Activated CD4-positive, alpha-beta T cell treated with anti-CD3 and anti-CD28 coated beads, Interleukin-2, amount 10 ng/mL, durations not matched to agents 7 days and 5 days (primary cell): ENCODE measurements at regions of chr20 and their contacts with region 1.

Region 1: GRCh38 chr20:34337982-34338726 is 24.9 kb upstream of the ITCH start:
- DNase-seq: no peak
- H3K4me3 Mint-ChIP-seq: no peak overlapping the region
- H3K27ac Mint-ChIP-seq: no peak overlapping the region
- H3K4me1 Mint-ChIP-seq: no peaks in the 10 kb centered on the region
- H3K27me3 Mint-ChIP-seq: no peaks in the 10 kb centered on the region

Region 2: GRCh38 chr20:34350095-34350494 is 11.9 kb after region 1 on chr20:
- CTCF ChIA-PET with region 1: interaction called, 12 read pairs
- POLR2A ChIA-PET with region 1: no interaction called
- DNase-seq: no peak
- H3K4me3 Mint-ChIP-seq: no peak overlapping the region
- H3K27ac Mint-ChIP-seq: no peak overlapping the region
- H3K4me1 Mint-ChIP-seq: peaks cover 7% of the 10 kb centered on the region
- H3K27me3 Mint-ChIP-seq: no peaks in the 10 kb centered on the region

Region 3: DNA sequence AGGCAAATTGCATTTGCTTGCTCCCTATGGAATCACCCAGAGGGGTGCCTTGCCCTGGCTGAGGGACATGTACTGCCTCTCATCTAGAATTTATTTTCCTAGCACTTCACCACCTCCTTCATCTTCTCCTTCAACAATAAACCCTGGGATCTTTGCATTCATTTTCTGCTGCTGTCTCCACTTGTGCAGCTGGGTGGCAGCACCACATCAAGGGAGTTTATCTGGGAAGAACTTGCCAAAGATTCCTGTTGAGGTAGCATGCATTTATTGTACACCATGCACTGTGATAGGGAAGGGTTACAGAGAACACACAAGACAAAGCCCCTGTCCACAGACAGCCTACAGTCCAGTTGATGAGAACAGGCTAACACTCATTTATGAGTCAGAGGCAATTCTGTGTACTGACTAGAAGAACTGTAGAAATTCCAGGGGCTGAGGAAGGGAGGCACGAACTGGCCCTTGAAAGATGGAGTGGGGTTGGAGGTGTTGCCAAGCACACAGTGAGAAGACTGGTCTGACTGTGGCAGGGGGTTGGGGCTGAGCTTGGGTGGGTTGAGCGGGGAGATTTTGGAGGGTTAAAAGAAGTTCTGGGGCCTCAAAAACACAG is 1173.8 kb after region 1 on chr20:
- CTCF ChIA-PET with region 1: no interaction called
- POLR2A ChIA-PET with region 1: interaction called, 10 read pairs
- DNase-seq: no peak
- H3K4me3 Mint-ChIP-seq: no peak overlapping the region
- H3K27ac Mint-ChIP-seq: peak overlapping the region; percentile 33
- H3K4me1 Mint-ChIP-seq: peaks cover 2% of the 10 kb centered on the region
- H3K27me3 Mint-ChIP-seq: no peaks in the 10 kb centered on the region